Activated CD4-positive, alpha-beta memory T cell treated with anti-CD3 and anti-CD28 coated beads, Interleukin-2, amount 10 ng/mL, durations not matched to agents 7 days and 5 days (primary cell): ENCODE measurements at regions of chr10 and their contacts with region 1.

Region 1: GRCh38 chr10:73625884-73626752 is 15.2 kb downstream of the MYOZ1 start:
- DNase-seq: peak; percentile 96
- H3K4me3 Mint-ChIP-seq: peak overlapping the region; percentile 98
- H3K27ac Mint-ChIP-seq: peak overlapping the region; percentile 91
- H3K4me1 Mint-ChIP-seq: peaks cover 27% of the 10 kb centered on the region
- H3K27me3 Mint-ChIP-seq: no peaks in the 10 kb centered on the region

Region 2: DNA sequence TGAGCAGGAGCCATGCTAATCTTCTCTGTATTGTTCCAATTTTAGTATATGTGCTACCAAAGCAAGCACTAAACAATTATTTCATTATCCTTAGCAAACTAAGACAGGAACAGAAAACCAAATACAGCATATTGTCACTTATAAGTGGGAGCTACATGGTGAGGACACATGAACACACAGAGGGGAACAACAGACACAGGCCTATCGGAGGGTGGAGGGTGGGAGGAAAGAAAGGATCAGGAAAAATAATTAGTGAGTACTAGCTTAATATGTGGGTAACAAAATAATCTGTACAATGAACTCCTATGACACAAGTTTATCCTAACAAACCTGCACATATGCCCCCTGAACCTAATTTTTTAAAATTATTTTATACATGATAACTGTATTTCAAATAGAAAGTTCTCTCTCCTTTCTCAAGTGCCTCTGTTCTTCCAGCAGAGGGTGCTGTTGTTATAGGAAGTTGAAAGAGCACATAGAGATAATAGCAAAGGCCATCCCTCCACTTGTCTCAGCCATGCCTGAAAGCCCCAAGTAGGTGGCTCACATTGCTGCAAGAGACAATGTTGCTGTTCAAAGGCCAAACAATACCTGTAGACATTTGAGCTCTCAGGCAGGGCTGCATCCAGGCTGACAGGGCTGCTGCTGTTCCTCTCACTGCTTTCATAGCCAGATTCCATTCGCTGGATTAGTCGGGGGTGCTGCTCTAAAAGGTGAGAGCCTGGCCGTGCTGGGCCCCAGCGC is 96.9 kb before region 1 on chr10:
- CTCF ChIA-PET with region 1: interaction called, 11 read pairs
- POLR2A ChIA-PET with region 1: no interaction called
- DNase-seq: peak; percentile 49
- H3K4me3 Mint-ChIP-seq: no peak overlapping the region
- H3K27ac Mint-ChIP-seq: no peak overlapping the region
- H3K4me1 Mint-ChIP-seq: no peaks in the 10 kb centered on the region
- H3K27me3 Mint-ChIP-seq: no peaks in the 10 kb centered on the region

Region 3: DNA sequence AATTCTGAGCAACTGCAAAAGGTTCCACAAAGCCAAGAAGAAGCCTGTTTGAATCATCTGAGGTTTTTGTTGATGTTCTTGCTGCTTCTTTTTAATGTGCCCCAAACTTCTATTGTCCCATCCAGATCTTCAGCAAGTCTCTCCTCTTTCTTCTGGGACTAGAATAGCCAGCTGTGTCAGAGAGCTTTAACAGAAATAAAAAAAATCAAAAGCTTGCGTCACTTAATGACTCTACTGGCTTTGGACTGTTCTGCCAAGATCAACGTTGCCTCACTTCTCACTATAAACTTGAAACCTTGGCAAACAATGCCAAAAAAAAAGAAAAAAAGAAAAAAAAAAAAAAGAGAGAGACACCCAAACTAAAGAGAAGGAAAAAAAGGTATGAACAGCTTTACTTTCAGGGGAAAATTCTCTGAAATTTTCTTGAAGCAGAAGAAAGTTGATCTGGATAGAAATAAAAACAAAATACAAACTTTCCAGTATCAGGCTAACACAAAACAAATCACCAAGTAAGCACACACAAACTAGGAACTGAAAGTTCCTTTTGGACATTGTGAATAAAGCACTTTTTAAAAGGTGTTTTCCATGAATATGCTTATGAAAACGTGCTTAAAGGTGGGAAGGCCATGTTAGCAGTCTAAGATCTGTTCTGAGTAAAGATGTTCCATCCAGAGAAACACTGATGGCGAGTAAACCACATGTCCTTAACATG is 49.8 kb before region 1 on chr10:
- CTCF ChIA-PET with region 1: no interaction called
- POLR2A ChIA-PET with region 1: no interaction called
- DNase-seq: no peak
- H3K4me3 Mint-ChIP-seq: no peak overlapping the region
- H3K27ac Mint-ChIP-seq: no peak overlapping the region
- H3K4me1 Mint-ChIP-seq: no peaks in the 10 kb centered on the region
- H3K27me3 Mint-ChIP-seq: no peaks in the 10 kb centered on the region